CD4-positive, alpha-beta memory T cell (primary cell): ENCODE measurements at regions of chr1 and their contacts with region 1.

Region 1: DNA sequence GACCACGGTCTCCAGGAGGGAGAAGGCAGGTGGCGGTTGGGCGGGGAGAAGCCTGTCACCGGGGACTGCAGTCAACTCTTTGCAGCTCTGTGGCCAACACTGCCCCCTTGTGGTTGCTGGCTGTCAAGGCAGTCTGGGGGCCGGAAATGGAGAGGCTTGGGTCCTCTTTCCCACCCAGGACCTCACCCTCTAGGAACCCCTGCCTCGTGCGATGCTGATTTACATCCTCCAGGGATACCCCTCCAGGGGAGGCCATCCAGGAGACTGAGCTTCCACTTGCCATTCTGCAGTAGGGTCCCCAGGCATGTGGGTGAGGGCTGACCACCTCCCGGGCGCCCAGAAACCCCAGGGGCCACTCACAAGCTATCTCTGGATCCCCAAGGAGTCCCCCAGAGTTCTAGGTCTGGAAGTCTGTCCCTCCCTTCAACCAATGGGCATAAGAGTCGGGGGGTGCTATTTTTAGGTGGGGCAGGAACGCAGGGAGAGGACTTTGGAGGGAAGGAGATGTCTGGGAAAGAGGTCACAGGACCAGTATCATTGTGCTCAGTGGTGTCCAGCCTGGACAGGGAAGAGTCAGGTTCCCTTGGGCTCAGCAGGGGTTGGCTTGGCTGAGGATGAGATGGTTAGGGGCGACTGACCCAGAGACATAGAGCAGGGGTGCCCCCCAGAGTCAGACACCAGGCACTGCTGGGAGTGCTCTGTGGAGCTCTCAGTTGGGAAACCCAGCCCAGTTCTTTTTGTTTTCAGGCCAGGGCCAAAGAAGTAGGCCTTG is 7.1 kb upstream of the GPR61 start:
- DNase-seq: peak; percentile 84 to 90 (median 86)
- H3K4me3 ChIP-seq: peak overlapping the region; percentile 55 to 71
- H3K4me3 Mint-ChIP-seq: peak overlapping the region; percentile 77 to 91 (median 86)
- H3K27ac ChIP-seq: peak overlapping the region; percentile 29
- H3K27ac Mint-ChIP-seq: peak overlapping the region; percentile 61 to 96 (median 89)
- H3K4me1 ChIP-seq: peaks cover 25% of the 10 kb centered on the region
- H3K4me1 Mint-ChIP-seq: peaks cover 15 to 37% (median 25%) of the 10 kb centered on the region in 4 donors
- H3K27me3 ChIP-seq: no peaks in the 10 kb centered on the region
- H3K27me3 Mint-ChIP-seq: peaks cover 0 to 2% of the 10 kb centered on the region in 2 donors

Region 2: GRCh38 chr1:108732398-108732797 is 800.2 kb before region 1 on chr1:
- CTCF ChIA-PET with region 1: no interaction called
- POLR2A ChIA-PET with region 1: no interaction called
- intact Hi-C with region 1: no loop called
- DNase-seq: no peak
- H3K4me3 ChIP-seq: no peak overlapping the region
- H3K4me3 Mint-ChIP-seq: no peak overlapping the region
- H3K27ac ChIP-seq: no peak overlapping the region
- H3K27ac Mint-ChIP-seq: no peak overlapping the region
- H3K4me1 ChIP-seq: no peaks in the 10 kb centered on the region
- H3K4me1 Mint-ChIP-seq: no peaks in the 10 kb centered on the region
- H3K27me3 ChIP-seq: no peaks in the 10 kb centered on the region
- H3K27me3 Mint-ChIP-seq: peaks cover 7 to 12% of the 10 kb centered on the region in 2 donors

Region 3: DNA sequence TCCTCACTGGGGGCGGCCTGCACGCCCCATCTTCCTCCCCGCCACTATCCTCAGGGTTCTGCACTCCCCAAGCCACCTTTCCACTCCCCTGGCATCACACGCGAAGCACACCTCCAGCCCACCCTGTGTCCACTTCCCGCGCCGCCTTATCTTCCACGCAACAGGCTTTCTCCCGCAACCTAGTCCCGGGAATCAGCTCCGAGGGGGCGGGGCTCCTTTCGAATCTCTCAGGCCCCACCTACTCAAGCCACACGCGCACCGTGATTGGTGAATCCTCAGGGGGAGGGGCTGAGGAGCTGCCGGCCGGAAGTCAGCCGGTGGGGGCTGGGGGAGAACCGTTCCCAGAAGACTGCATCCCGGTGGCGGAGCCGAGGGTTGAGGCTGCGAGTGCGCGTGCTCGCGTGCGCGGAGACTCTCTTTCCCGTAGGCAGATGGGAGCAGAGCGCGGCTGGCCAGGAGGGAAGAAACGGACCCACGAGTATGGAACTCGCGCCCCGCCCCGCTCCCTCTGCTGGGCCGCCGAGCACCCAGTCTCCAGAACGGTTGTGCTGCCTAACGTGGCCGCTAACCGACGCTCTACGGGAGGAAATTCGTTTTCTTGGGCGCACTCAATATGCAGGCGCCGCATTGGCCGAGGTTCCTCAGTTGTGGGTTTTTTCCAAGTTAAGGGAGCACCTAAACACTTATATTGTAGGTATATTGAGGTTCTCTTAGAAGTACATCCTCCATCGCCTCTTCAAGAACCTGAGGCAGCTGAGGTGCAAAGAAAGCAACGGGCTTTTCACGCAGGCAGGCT is 249.4 kb before region 1 on chr1 and contains the start of gene PSRC1:
- CTCF ChIA-PET with region 1: interaction called, 174 read pairs
- POLR2A ChIA-PET with region 1: interaction called, 8 read pairs
- intact Hi-C with region 1: loop called (anchors 1 kb)
- DNase-seq: peak; percentile 87 to 91 (median 88)
- H3K4me3 ChIP-seq: peak within 1 kb of the TSS; percentile 74 to 91
- H3K4me3 Mint-ChIP-seq: peak within 1 kb of the TSS; percentile 91 to 100 (median 96)
- H3K27ac ChIP-seq: peak within 1 kb of the TSS; percentile 59
- H3K27ac Mint-ChIP-seq: peak within 1 kb of the TSS; percentile 82 to 93 (median 92)
- H3K4me1 ChIP-seq: peaks cover 23% of the 10 kb centered on the region
- H3K4me1 Mint-ChIP-seq: peaks cover 8 to 30% (median 16%) of the 10 kb centered on the region in 4 donors
- H3K27me3 ChIP-seq: no peaks in the 10 kb centered on the region
- H3K27me3 Mint-ChIP-seq: no peaks in the 10 kb centered on the region
- total RNA-seq, gene PSRC1: 0.17 to 0.28 TPM

Region 4: DNA sequence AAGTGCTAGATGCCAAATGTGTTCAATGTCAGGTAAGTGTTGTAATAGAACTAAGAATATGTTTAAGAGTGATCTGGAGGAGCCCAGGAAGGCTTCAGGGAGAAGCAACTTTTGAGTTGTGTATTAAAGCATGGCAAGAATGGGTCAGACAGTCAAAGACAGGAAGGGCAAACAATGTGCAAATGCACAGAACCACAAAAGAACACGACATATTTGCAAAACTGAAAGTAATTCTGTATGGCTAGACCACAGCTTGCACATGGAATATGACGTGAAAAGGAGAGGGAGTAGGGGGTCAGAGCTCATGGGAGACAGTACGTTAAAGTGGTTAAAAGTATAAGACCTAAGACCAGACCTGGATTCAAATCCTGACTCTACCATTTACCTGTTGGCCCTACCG is 127.7 kb before region 1 on chr1:
- CTCF ChIA-PET with region 1: interaction called, 17 read pairs
- POLR2A ChIA-PET with region 1: no interaction called
- intact Hi-C with region 1: no loop called
- DNase-seq: no peak
- H3K4me3 ChIP-seq: no peak overlapping the region
- H3K4me3 Mint-ChIP-seq: peak overlapping the region in 4 of 8 donors; percentile 0 to 63 (median 27)
- H3K27ac ChIP-seq: no peak overlapping the region
- H3K27ac Mint-ChIP-seq: peak overlapping the region; percentile 4 to 84 (median 71)
- H3K4me1 ChIP-seq: peaks cover 10% of the 10 kb centered on the region
- H3K4me1 Mint-ChIP-seq: peaks cover 12 to 31% (median 17%) of the 10 kb centered on the region in 4 donors
- H3K27me3 ChIP-seq: no peaks in the 10 kb centered on the region
- H3K27me3 Mint-ChIP-seq: no peaks in the 10 kb centered on the region

Region 5: GRCh38 chr1:109493805-109494539 is 38.6 kb before region 1 on chr1 and contains the start of gene CYB561D1:
- CTCF ChIA-PET with region 1: interaction called, 1,669 read pairs
- POLR2A ChIA-PET with region 1: interaction called, 438 read pairs
- intact Hi-C with region 1: loop called (anchors 1 kb)
- DNase-seq: peak; percentile 87 to 95 (median 89)
- H3K4me3 ChIP-seq: peak within 1 kb of the TSS; percentile 91 to 97
- H3K4me3 Mint-ChIP-seq: peak within 1 kb of the TSS; percentile 94 to 97 (median 96)
- H3K27ac ChIP-seq: peak within 1 kb of the TSS; percentile 53
- H3K27ac Mint-ChIP-seq: peak within 1 kb of the TSS; percentile 86 to 95 (median 93)
- H3K4me1 ChIP-seq: peaks cover 57% of the 10 kb centered on the region
- H3K4me1 Mint-ChIP-seq: peaks cover 30 to 60% (median 46%) of the 10 kb centered on the region in 4 donors
- H3K27me3 ChIP-seq: no peaks in the 10 kb centered on the region
- H3K27me3 Mint-ChIP-seq: no peaks in the 10 kb centered on the region
- total RNA-seq, gene CYB561D1: 40.7 to 41.6 TPM

Region 6: GRCh38 chr1:109521002-109521951 is 11.3 kb before region 1 on chr1:
- CTCF ChIA-PET with region 1: interaction called, 1,669 read pairs
- POLR2A ChIA-PET with region 1: interaction called, 3 read pairs
- intact Hi-C with region 1: no loop called
- DNase-seq: no peak
- H3K4me3 ChIP-seq: no peak overlapping the region
- H3K4me3 Mint-ChIP-seq: no peak overlapping the region
- H3K27ac ChIP-seq: no peak overlapping the region
- H3K27ac Mint-ChIP-seq: no peak overlapping the region
- H3K4me1 ChIP-seq: no peaks in the 10 kb centered on the region
- H3K4me1 Mint-ChIP-seq: peaks cover 0 to 2% (median 0%) of the 10 kb centered on the region in 4 donors
- H3K27me3 ChIP-seq: no peaks in the 10 kb centered on the region
- H3K27me3 Mint-ChIP-seq: peaks cover 2% of the 10 kb centered on the region in 2 donors

Region 7: GRCh38 chr1:109697088-109697487 is 164.5 kb after region 1 on chr1:
- CTCF ChIA-PET with region 1: no interaction called
- POLR2A ChIA-PET with region 1: no interaction called
- intact Hi-C with region 1: no loop called
- DNase-seq: no peak
- H3K4me3 ChIP-seq: no peak overlapping the region
- H3K4me3 Mint-ChIP-seq: no peak overlapping the region
- H3K27ac ChIP-seq: no peak overlapping the region
- H3K27ac Mint-ChIP-seq: no peak overlapping the region
- H3K4me1 ChIP-seq: no peaks in the 10 kb centered on the region
- H3K4me1 Mint-ChIP-seq: no peaks in the 10 kb centered on the region
- H3K27me3 ChIP-seq: no peaks in the 10 kb centered on the region
- H3K27me3 Mint-ChIP-seq: no peaks in the 10 kb centered on the region